ENCODE measurements at regions of chr3 and their contacts with region 1.

Region 1: DNA sequence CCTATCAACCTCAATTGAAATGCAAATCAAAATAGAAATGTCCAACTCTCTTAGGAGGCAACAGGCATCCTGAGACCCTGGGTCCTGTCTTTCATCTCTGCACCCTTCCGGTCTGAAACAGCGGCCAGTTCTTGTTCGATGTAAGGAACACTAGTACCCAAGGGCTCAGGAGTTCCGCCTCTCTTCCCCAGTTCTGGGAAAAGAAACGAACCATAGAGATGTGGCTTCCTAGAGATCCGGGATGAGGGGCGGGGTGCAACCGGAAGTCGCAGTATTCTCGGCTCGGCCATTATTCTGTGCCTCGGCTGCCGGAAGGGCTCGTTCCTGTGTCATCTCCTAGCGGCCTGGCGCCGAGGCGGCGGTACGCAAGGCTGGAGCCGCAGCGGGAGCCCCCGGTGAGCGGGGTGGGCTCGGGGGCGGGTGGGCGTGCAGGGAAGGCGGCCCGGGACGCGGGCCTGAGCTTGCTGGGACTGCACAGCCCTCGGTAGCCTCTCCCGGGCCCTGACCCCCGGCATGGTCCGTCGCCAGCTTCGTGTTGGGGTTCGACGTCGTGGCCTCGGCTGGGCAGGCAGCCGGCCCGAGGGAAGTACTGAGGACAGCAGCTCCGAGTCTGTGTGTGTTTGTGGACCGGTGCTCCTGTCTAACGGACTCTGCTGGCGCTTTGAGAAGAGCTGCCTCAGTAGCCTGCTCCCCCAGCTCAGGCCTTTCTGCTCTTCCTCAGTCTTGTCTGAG is at the start of gene ZNF197:
- DNase-seq: peak; percentile 5 to 64 (median 27)
- ATAC-seq: peak; percentile 80
- H3K4me3 ChIP-seq: peak within 1 kb of the TSS; percentile 51
- H3K4me3 Mint-ChIP-seq: peak within 1 kb of the TSS; percentile 83 to 94 (median 92)
- H3K27ac ChIP-seq: peak within 1 kb of the TSS; percentile 66
- H3K27ac Mint-ChIP-seq: peak within 1 kb of the TSS; percentile 60 to 88 (median 81)
- H3K4me1 ChIP-seq: peaks cover 9 to 10% of the 10 kb centered on the region in 2 donors
- H3K4me1 Mint-ChIP-seq: peaks cover 18 to 53% (median 47%) of the 10 kb centered on the region in 7 donors
- H3K27me3 ChIP-seq: no peaks in the 10 kb centered on the region
- H3K27me3 Mint-ChIP-seq: no peaks in the 10 kb centered on the region
- total RNA-seq, gene ZNF197: 5.5 to 15.6 (median 15.0) TPM

Region 2: GRCh38 chr3:44387404-44387803 is 237.5 kb before region 1 on chr3:
- CTCF ChIA-PET with region 1: no interaction called
- POLR2A ChIA-PET with region 1: no interaction called
- intact Hi-C with region 1: no loop called
- DNase-seq: no peak
- ATAC-seq: no peak
- H3K4me3 ChIP-seq: no peak overlapping the region
- H3K4me3 Mint-ChIP-seq: no peak overlapping the region
- H3K27ac ChIP-seq: no peak overlapping the region
- H3K27ac Mint-ChIP-seq: no peak overlapping the region
- H3K4me1 ChIP-seq: no peaks in the 10 kb centered on the region
- H3K4me1 Mint-ChIP-seq: no peaks in the 10 kb centered on the region
- H3K27me3 ChIP-seq: no peaks in the 10 kb centered on the region
- H3K27me3 Mint-ChIP-seq: no peaks in the 10 kb centered on the region

Region 3: GRCh38 chr3:44504566-44504965 is 120.3 kb before region 1 on chr3:
- CTCF ChIA-PET with region 1: no interaction called
- POLR2A ChIA-PET with region 1: no interaction called
- intact Hi-C with region 1: no loop called
- DNase-seq: no peak
- ATAC-seq: no peak
- H3K4me3 ChIP-seq: no peak overlapping the region
- H3K4me3 Mint-ChIP-seq: no peak overlapping the region
- H3K27ac ChIP-seq: no peak overlapping the region
- H3K27ac Mint-ChIP-seq: no peak overlapping the region
- H3K4me1 ChIP-seq: peaks cover 6 to 8% of the 10 kb centered on the region in 2 donors
- H3K4me1 Mint-ChIP-seq: peaks cover 16 to 43% (median 35%) of the 10 kb centered on the region in 7 donors
- H3K27me3 ChIP-seq: no peaks in the 10 kb centered on the region
- H3K27me3 Mint-ChIP-seq: no peaks in the 10 kb centered on the region

Region 4: DNA sequence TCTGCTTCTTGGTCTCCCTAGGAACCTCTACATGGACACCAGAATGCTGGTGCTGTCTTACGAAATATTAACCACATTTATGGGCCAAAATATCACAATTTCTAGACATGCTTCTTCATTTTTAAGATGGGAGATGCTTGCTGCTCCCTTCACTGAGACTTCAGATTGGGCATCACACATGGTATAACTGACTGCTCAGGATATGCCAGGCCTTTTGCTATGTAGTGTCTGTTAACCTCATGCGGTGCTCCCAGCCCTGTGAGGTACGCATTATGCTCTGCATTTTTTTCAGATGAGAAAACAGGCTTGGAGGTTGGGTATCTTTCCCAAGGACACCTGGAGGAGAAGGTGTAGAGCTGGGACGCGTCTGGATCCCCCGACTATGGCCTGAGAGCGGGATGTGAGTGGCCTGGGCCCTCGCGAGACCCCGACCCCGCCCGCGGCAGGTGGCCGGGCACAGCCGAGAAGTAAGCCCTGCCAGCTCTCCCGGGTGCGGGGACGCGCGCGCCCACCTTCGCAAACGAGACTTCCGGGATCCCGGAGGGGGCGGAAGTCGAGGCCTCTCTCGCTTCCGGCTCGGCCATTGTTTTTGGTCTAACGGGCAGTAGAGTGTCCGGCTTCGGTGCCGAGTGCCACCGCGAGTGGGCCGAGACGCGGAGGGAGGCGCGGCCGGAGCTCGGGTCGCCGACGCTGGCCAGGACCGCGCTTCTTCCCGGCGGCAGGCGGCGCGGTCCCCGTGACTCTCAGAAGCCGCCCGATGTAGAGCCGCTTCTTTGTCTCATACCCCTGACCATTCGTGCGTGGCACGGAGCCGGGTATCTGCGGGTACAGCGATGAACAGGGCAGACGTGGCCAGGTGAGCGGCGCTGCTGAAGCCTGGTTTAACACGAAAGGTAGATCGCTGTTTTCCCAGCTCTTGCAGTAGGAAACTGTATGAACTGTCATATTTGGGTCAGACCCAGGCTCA is 70.0 kb before region 1 on chr3 and contains the start of gene ZKSCAN7:
- CTCF ChIA-PET with region 1: no interaction called
- POLR2A ChIA-PET with region 1: no interaction called
- intact Hi-C with region 1: loop called in 1 of 2 experiments (anchors 1 kb)
- DNase-seq: peak; percentile 12 to 49 (median 42)
- ATAC-seq: peak; percentile 71
- H3K4me3 ChIP-seq: peak within 1 kb of the TSS; percentile 87
- H3K4me3 Mint-ChIP-seq: peak within 1 kb of the TSS; percentile 78 to 94 (median 91)
- H3K27ac ChIP-seq: peak within 1 kb of the TSS; percentile 47
- H3K27ac Mint-ChIP-seq: peak within 1 kb of the TSS; percentile 6 to 94 (median 82)
- H3K4me1 ChIP-seq: peaks cover 9 to 14% of the 10 kb centered on the region in 2 donors
- H3K4me1 Mint-ChIP-seq: peaks cover 10 to 34% (median 26%) of the 10 kb centered on the region in 7 donors
- H3K27me3 ChIP-seq: no peaks in the 10 kb centered on the region
- H3K27me3 Mint-ChIP-seq: peaks cover 0 to 4% (median 1%) of the 10 kb centered on the region in 5 donors
- total RNA-seq, gene ZKSCAN7: 1.1 to 4.5 (median 1.7) TPM

Region 5: DNA sequence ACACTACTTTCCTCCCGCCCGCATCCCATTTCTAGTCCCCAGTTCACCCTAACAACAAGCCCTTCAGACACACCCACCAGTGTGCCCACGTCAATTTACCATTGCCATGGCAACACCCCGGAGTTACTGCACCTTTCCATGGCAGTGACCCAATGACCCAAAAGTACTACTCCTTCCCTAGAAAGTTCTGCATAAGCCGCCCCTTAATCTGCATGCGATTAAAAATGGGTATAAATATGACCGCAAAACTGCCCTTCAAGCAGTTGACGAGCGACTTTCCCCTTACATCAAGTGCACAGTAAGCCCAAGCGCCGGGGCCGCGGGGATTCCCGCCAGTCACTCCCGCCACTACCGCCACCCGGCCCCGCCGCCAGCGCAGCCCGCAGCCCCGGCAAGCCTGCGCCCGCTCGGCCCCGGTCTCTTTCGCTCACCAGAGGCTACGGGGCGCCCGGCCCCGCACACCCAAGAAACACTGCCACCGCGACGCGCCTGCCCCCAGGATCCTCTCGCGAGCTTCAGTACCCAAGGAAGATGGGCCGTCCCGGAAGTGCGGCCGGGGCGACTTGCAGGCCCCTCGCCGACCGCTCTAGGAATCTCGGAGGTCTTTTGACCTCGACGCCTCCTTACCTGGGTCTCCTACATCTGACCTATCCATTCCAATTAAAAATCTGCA is 60.3 kb after region 1 on chr3:
- CTCF ChIA-PET with region 1: no interaction called
- POLR2A ChIA-PET with region 1: no interaction called
- intact Hi-C with region 1: loop called in 1 of 2 experiments (anchors 1 kb)
- DNase-seq: peak; percentile 7 to 56 (median 31)
- ATAC-seq: peak; percentile 79
- H3K4me3 ChIP-seq: peak overlapping the region; percentile 25
- H3K4me3 Mint-ChIP-seq: peak overlapping the region; percentile 76 to 94 (median 86)
- H3K27ac ChIP-seq: peak overlapping the region; percentile 26
- H3K27ac Mint-ChIP-seq: peak overlapping the region in 8 of 9 donors; percentile 3 to 92 (median 62)
- H3K4me1 ChIP-seq: no peaks in the 10 kb centered on the region
- H3K4me1 Mint-ChIP-seq: peaks cover 7 to 22% (median 17%) of the 10 kb centered on the region in 7 donors
- H3K27me3 ChIP-seq: no peaks in the 10 kb centered on the region
- H3K27me3 Mint-ChIP-seq: peaks cover 12 to 47% (median 28%) of the 10 kb centered on the region in 5 donors

Region 6: GRCh38 chr3:44729384-44729910 is 104.5 kb after region 1 on chr3 and contains the start of gene ZNF501:
- CTCF ChIA-PET with region 1: interaction called, 3 read pairs
- POLR2A ChIA-PET with region 1: no interaction called
- intact Hi-C with region 1: loop called (anchors 10 kb)
- DNase-seq: peak; percentile 65 to 83 (median 75)
- ATAC-seq: peak; percentile 97
- H3K4me3 ChIP-seq: peak within 1 kb of the TSS; percentile 75
- H3K4me3 Mint-ChIP-seq: peak within 1 kb of the TSS; percentile 90 to 99 (median 92)
- H3K27ac ChIP-seq: peak within 1 kb of the TSS; percentile 45
- H3K27ac Mint-ChIP-seq: peak within 1 kb of the TSS; percentile 61 to 91 (median 84)
- H3K4me1 ChIP-seq: no peaks in the 10 kb centered on the region
- H3K4me1 Mint-ChIP-seq: peaks cover 2 to 20% (median 15%) of the 10 kb centered on the region in 7 donors
- H3K27me3 ChIP-seq: no peaks in the 10 kb centered on the region
- H3K27me3 Mint-ChIP-seq: no peaks in the 10 kb centered on the region
- total RNA-seq, gene ZNF501: 1.1 to 5.3 (median 2.6) TPM

Region 7: DNA sequence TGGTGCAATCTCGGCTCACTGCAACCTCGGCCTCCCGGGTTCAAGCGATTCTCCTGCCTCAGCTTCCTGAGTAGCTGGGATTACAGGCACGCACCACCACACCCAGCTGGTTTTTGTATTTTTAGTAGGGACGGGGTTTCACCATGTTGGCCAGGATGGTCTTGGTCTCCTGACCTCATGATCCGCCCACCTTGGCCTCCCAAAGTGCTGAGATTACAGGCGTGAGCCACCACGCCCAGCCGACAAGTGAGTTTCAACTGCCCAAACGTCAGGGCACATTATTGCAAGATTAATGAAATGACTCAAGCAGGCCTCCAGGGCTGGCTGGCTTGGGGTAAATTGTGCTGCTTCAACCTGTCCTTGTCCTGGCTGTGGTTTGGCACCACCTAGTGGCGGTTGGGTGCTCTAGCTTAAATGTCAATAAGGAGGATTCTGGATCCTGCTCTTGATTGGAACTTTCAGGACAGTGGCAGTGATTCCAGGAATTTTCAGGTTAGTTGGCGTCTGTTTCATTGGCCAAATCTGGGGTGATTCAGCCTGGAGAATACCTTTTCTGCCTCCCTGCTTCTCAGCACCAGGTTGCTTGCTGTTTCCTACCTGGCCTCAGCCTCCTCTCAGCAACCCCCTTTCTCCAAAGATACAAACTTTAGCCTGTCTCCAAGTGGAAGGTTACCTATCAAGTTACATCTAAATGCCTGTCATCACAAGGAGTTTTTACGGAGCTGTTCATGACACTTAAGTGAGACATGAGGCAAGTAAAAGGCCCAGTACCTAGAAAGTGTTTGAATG is 1031.9 kb after region 1 on chr3:
- CTCF ChIA-PET with region 1: no interaction called
- POLR2A ChIA-PET with region 1: no interaction called
- intact Hi-C with region 1: no loop called
- DNase-seq: peak; percentile 65 to 83 (median 78)
- ATAC-seq: peak; percentile 94
- H3K4me3 ChIP-seq: no peak overlapping the region
- H3K4me3 Mint-ChIP-seq: no peak overlapping the region
- H3K27ac ChIP-seq: no peak overlapping the region
- H3K27ac Mint-ChIP-seq: peak overlapping the region in 1 of 9 donors; percentile 30
- H3K4me1 ChIP-seq: no peaks in the 10 kb centered on the region
- H3K4me1 Mint-ChIP-seq: peaks cover 6 to 27% (median 18%) of the 10 kb centered on the region in 7 donors
- H3K27me3 ChIP-seq: no peaks in the 10 kb centered on the region
- H3K27me3 Mint-ChIP-seq: no peaks in the 10 kb centered on the region